ENCODE measurements at regions of chr5 and their contacts with region 1.

Region 1: GRCh38 chr5:34915139-34915855 is at the starts of genes BRIX1 and RAD1:
- DNase-seq: peak; percentile 77
- H3K4me3 ChIP-seq: peak within 1 kb of the TSS; percentile 93
- CTCF ChIP-seq: peak; percentile 15

Region 2: DNA sequence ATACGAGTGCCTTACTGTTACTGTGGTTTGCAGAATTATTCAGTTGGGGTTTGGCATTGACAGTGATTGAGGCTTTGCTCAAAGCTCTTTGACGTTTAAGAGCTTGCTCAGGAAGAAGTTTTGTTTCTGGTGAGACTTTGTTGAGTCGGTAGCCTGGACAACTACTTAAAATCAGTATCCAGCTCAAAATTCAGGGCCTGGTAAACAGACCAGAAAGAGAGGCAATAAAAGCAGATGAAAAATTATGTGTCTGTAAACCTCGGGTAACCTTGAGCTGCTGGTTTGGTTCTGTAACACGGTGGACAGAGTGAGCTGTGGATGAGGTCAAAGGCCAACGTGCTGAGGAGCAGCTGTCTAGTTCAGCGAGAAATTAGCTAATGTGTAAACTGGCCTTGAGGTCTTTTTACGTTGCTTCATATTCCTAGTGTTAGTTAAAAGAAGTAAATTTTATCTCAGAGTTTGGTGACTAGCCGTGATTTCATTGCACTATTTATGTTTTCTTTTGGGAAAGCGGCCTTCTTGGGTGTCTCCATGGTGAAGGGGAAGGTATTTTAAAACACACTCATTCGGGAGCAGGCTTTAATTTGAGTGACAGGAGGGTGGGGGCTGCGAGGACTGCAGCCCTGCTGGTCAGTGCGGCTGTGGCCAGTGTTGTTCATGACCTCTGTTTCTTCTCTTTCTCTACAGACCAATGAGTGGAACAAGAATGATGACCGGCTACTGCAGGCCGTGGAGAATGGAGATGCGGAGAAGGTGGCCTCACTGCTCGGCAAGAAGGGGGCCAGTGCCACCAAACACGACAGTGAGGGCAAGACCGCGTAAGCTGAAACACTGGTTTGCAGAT is 158.3 kb before region 1 on chr5:
- CTCF ChIA-PET with region 1: no interaction called
- POLR2A ChIA-PET with region 1: no interaction called
- DNase-seq: no peak
- H3K4me3 ChIP-seq: no peak overlapping the region
- CTCF ChIP-seq: no peak

Region 3: DNA sequence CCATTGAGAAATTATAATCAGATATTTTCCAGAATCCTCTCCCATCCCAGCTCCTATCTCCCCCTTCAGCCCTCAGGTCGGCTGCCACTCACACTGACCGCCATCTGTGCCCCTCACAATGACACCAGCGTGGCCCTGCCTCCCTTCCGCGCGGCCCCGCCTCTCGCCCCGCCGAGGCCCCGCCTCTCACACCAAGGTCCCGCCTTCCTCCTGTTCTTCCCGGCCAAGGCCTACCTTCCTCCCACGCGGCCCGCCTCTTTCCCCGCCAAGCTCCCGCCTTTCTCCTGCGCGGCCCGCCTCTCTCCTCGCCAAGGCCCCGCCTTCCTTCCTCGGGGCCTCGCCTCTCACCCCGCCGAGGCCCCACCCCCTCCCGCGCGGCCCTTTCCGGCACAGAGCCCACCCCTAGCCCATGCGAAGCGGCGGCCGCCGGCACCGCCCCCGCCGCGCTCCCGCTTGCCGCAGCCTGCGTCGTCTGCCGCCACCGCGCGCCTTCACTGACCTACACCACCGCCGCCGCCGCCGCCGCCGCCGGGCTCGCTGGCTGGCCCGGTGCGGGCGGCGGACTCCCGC is 13.9 kb after region 1 on chr5 and contains the start of gene DNAJC21:
- CTCF ChIA-PET with region 1: interaction called, 15 read pairs
- POLR2A ChIA-PET with region 1: interaction called, 14 read pairs
- DNase-seq: peak; percentile 66
- H3K4me3 ChIP-seq: peak within 1 kb of the TSS; percentile 91
- CTCF ChIP-seq: no peak

Measured in AG04449 (cell line).